ENCODE measurements at regions of chrX and their contacts with region 1.

Region 1: GRCh38 chrX:16082470-16083085 is 40.8 kb upstream of the GRPR start:
- DNase-seq: no peak
- ATAC-seq: no peak
- H3K4me3 ChIP-seq: no peak overlapping the region
- H3K4me3 Mint-ChIP-seq: no peak overlapping the region
- H3K27ac ChIP-seq: no peak overlapping the region
- H3K27ac Mint-ChIP-seq: no peak overlapping the region
- H3K4me1 ChIP-seq: no peaks in the 10 kb centered on the region
- H3K4me1 Mint-ChIP-seq: no peaks in the 10 kb centered on the region
- H3K27me3 ChIP-seq: no peaks in the 10 kb centered on the region
- H3K27me3 Mint-ChIP-seq: peaks cover 6% of the 10 kb centered on the region
- CTCF ChIP-seq: no peak

Region 2: DNA sequence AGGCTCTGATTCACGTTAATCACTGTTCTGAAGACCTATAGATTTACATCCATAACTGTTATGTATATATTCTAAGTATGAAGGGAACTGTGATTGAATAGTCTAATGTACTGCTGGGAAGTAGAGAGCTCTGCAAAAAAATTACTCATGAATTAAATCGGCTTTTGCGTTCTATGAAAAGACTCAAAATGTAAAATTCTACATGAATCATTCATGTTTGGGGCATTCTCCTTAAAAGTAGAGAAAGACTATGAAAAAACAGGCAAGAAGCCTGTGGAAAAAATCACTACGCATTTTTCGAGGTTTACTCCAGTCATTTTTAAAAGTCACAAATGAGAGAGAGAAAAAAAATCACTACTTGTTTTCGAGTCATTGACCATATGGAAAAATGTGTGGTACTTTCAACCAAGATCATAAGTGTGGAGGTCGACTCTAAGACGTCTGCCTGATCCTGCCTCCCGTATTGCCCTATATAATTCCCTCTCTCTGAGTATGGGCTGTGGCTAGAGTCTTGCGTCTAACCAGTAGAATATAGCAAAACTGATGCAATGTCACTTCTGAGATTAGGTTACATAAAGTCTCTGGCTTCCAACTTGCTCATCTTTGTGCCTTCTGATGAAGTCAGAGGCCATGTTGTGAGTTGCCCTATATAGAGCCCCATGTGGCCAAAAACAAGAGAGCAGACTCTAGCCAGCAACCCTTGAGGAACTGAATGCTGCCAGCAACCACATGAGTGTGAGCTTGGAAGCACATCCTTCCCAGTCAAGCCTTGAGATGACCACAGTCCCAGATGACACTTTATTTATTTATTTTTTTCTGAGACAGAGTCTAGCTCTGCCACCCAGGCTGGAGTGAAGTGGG is 666.2 kb before region 1 on chrX:
- CTCF ChIA-PET with region 1: no interaction called
- POLR2A ChIA-PET with region 1: no interaction called
- intact Hi-C with region 1: loop called in 1 of 2 experiments (anchors 5 kb)
- DNase-seq: no peak
- ATAC-seq: no peak
- H3K4me3 ChIP-seq: no peak overlapping the region
- H3K4me3 Mint-ChIP-seq: no peak overlapping the region
- H3K27ac ChIP-seq: no peak overlapping the region
- H3K27ac Mint-ChIP-seq: no peak overlapping the region
- H3K4me1 ChIP-seq: no peaks in the 10 kb centered on the region
- H3K4me1 Mint-ChIP-seq: no peaks in the 10 kb centered on the region
- H3K27me3 ChIP-seq: no peaks in the 10 kb centered on the region
- H3K27me3 Mint-ChIP-seq: peaks cover 7% of the 10 kb centered on the region
- CTCF ChIP-seq: no peak

Measured in CD8-positive, alpha-beta T cell (primary cell).